MCF 10A (cell line): ENCODE measurements at regions of chrX and their contacts with region 1.

Region 1: GRCh38 chrX:21839334-21840192 is at the start of gene MBTPS2:
- DNase-seq: peak; percentile 78
- H3K4me3 Mint-ChIP-seq: peak within 1 kb of the TSS; percentile 85
- H3K27ac Mint-ChIP-seq: peak within 1 kb of the TSS; percentile 93
- H3K4me1 Mint-ChIP-seq: no peaks in the 10 kb centered on the region
- H3K27me3 Mint-ChIP-seq: peaks cover 42% of the 10 kb centered on the region
- CTCF ChIP-seq: no peak
- total RNA-seq, gene MBTPS2: 21.1 and 21.8 TPM in 2 replicates

Region 2: GRCh38 chrX:21735038-21735767 is 104.4 kb before region 1 on chrX:
- CTCF ChIA-PET with region 1: no interaction called
- POLR2A ChIA-PET with region 1: no interaction called
- intact Hi-C with region 1: no loop called
- DNase-seq: no peak
- H3K4me3 Mint-ChIP-seq: no peak overlapping the region
- H3K27ac Mint-ChIP-seq: no peak overlapping the region
- H3K4me1 Mint-ChIP-seq: no peaks in the 10 kb centered on the region
- H3K27me3 Mint-ChIP-seq: peaks cover 83% of the 10 kb centered on the region
- CTCF ChIP-seq: no peak

Region 3: DNA sequence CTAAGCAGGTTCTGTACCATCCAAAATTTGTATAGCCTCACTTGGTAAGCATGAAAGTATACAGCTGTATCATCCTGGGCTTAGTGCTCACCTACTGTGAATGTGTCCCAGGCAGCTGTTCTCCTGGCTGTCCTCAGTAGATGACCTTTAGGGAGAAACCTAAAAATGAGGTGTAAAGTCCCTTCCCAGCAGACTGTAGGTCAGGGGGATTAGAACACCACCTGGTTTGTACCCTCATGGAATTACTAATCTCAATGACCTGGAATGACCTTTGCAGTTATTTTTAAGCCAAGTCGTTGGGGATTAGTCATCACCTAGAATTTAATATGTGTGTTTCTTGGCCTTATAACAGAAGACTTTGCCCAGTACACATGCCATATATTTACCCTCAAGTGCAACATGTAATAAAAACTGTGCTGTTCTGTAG is 39.2 kb before region 1 on chrX:
- CTCF ChIA-PET with region 1: no interaction called
- POLR2A ChIA-PET with region 1: interaction called, 11 read pairs
- intact Hi-C with region 1: no loop called
- DNase-seq: peak; percentile 54
- H3K4me3 Mint-ChIP-seq: no peak overlapping the region
- H3K27ac Mint-ChIP-seq: no peak overlapping the region
- H3K4me1 Mint-ChIP-seq: peaks cover 31% of the 10 kb centered on the region
- H3K27me3 Mint-ChIP-seq: peaks cover 53% of the 10 kb centered on the region
- CTCF ChIP-seq: no peak

Region 4: DNA sequence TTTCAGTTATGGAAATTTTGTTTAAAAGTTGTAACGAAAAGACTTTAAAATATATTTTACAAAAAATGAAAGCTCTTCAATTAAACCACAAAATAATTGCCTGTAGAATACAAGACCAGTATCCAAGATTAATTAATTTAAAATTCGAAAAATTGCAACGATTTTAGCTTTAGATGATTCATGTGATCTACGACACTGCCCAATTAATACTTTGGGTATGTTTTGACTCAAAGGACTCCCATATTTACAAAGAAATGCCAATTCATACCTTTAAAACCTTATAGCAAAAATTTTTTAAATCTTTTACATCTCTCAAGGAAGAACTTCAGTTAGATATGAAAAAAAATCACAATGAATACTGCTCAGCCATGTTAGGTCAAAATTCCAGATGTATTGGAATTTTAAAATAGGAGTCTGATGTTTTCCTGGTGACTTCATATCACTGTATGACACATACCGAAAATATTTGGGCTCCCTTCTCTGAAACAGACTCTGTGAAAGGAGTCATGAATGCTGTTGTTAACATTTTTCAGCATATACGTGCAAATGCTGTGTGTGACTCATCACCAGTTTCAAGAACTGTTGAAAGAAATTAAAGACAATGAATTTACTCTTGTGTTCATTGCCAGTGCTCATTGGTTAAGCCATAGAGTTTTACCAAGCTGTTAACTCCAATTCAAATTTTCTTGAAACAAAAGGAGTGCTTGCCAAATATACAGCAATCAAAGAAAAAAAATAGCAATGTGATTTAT is 87.1 kb after region 1 on chrX:
- CTCF ChIA-PET with region 1: no interaction called
- POLR2A ChIA-PET with region 1: interaction called, 14 read pairs
- intact Hi-C with region 1: no loop called
- DNase-seq: peak; percentile 94
- H3K4me3 Mint-ChIP-seq: peak overlapping the region; percentile 52
- H3K27ac Mint-ChIP-seq: peak overlapping the region; percentile 78
- H3K4me1 Mint-ChIP-seq: peaks cover 12% of the 10 kb centered on the region
- H3K27me3 Mint-ChIP-seq: peaks cover 16% of the 10 kb centered on the region
- CTCF ChIP-seq: no peak

Region 5: GRCh38 chrX:21940356-21940829 is 100.8 kb after region 1 on chrX and contains the start of gene SMS:
- CTCF ChIA-PET with region 1: interaction called, 4 read pairs
- POLR2A ChIA-PET with region 1: interaction called, 13 read pairs
- intact Hi-C with region 1: loop called (anchors 5 kb)
- DNase-seq: peak; percentile 77
- H3K4me3 Mint-ChIP-seq: peak within 1 kb of the TSS; percentile 69
- H3K27ac Mint-ChIP-seq: no peak within 1 kb of the TSS
- H3K4me1 Mint-ChIP-seq: peaks cover 13% of the 10 kb centered on the region
- H3K27me3 Mint-ChIP-seq: no peaks in the 10 kb centered on the region
- CTCF ChIP-seq: no peak
- total RNA-seq, gene SMS: 160 and 181 TPM in 2 replicates

Region 6: GRCh38 chrX:21972721-21973120 is 133.2 kb after region 1 on chrX:
- CTCF ChIA-PET with region 1: no interaction called
- POLR2A ChIA-PET with region 1: interaction called, 4 read pairs
- intact Hi-C with region 1: loop called (anchors 5 kb)
- DNase-seq: no peak
- H3K4me3 Mint-ChIP-seq: no peak overlapping the region
- H3K27ac Mint-ChIP-seq: no peak overlapping the region
- H3K4me1 Mint-ChIP-seq: peaks cover 6% of the 10 kb centered on the region
- H3K27me3 Mint-ChIP-seq: peaks cover 65% of the 10 kb centered on the region
- CTCF ChIP-seq: no peak